GM10248 (cell line): ENCODE measurements at regions of chr16 and their contacts with region 1.

Region 1: DNA sequence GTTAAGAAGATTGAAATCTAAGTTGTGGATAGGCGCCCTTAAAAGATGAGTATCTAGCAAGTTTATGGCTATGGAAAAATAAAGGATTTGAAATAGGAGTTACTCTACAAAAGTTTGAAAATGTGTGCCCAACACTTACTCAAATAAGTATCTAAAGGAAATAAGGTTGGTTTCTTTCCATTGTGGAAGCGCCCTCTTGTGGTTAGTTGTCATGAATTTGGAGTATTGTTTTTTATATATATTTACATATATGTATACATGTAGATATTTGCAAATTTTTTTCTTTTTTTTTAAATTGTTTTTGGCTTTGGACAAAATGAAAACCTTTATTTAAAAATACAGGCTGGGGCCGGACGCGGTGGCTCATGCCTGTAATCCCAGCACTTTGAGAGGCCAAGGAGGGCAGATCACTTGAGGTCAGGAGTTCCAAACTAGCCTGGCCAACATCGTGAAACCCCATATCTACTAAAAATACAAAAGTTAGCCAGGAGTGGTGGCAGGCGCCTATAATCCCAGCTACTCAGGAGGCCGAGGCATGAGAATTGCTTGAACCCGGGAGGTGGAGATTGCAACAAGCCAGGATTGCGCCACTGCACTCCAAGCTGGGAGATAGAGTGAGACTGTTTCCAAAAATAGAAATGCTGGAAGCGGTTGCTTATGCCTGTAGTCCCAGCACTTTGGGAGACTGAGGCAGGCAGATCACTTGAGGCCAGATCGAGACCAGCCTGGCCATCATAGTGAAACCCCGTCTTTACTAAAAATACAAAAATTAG is 24.0 kb upstream of the VPS4A start:
- DNase-seq: peak; percentile 56
- CTCF ChIP-seq: peak; percentile 46

Region 2: DNA sequence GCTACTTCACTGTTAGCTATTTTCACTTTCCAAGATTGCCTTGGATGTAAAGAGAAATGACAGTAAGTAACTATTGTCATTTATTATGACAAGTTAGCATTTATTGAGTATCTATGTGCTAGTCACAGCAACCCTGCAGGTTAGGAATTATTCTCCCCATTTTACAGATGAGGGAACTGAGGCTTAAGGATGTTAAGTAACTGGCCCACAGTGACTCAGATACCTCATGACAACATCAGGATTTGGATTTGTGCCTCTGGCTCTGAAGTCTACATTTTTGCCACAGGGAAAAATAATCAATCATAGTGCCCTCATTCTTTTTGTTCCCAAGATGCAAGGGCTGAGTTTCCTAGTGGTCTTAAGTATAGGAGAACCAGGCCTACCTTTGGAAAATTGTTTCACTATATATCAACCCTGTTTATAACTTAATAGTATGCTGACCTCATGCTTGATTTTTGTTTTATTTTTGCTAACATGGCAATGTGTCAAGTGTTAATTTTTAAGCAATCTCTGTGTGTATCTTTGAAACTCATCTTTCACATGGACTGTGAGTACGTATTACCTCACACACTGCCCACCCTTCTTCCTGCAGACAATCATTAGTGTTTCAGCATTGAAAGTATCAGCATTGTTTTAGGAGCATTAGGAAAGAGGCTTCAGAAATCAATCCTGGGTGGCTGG is 338.8 kb before region 1 on chr16:
- CTCF ChIA-PET with region 1: no interaction called
- POLR2A ChIA-PET with region 1: no interaction called
- DNase-seq: no peak
- CTCF ChIP-seq: no peak

Region 3: GRCh38 chr16:69089091-69089910 is 197.8 kb before region 1 on chr16:
- CTCF ChIA-PET with region 1: no interaction called
- POLR2A ChIA-PET with region 1: interaction called, 12 read pairs
- DNase-seq: no peak
- CTCF ChIP-seq: no peak

Region 4: GRCh38 chr16:69150146-69150865 is 136.8 kb before region 1 on chr16:
- CTCF ChIA-PET with region 1: interaction called, 72 read pairs
- POLR2A ChIA-PET with region 1: interaction called, 5 read pairs
- DNase-seq: peak; percentile 71
- CTCF ChIP-seq: peak; percentile 56

Region 5: DNA sequence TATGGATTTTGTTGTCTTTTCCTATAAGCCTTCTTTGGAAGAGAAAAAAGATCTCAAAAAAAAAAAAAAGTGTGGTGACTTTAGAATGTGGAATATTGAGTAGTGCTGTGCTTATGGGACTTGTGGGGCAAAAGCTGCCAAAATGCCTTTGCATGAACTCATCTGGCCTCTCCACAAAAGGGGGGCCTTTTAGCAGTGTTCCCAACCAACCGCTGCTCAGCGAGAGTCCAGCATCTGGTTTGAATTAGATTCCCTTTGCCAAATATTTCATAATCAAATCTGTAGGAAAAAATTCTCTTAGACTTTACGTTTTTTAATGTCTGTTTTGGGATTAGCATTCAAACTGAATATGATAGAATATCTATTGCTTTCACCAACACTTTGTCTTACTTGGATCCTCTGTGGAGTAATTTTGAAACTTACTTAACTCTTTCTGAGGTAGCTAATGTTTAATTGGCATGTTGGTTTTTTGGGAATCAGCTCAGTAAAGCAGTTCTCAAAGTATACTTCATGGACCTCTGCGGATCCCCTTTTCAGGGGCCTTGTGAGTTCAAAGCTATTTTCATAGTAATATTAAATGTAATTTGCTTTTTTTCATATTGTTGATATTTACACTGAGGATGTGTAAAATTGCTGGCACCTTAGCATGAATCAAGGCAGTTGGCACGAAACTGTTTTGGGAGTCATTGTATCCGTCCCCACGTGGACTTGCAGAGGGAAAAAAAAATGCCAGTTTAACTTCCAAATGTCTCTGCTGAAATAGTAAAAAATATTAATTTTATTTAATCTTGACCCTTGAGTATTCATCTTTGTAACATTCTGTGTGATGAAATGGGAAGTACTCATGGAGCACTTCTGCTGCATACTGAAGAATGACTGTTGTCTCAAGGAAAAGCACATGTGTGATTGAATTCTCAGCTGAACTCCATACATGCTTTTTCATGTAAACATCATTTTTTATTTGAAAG is 10.7 kb before region 1 on chr16:
- CTCF ChIA-PET with region 1: interaction called, 20 read pairs
- POLR2A ChIA-PET with region 1: no interaction called
- DNase-seq: no peak
- CTCF ChIP-seq: no peak